PC-3 (cell line): ENCODE measurements at regions of chr14 and their contacts with region 1.

Region 1: GRCh38 chr14:30185832-30186231 is 258.2 kb upstream of the PRKD1 start:
- DNase-seq: no peak
- ATAC-seq: no peak
- H3K4me3 ChIP-seq: no peak overlapping the region
- H3K27ac ChIP-seq: no peak overlapping the region
- H3K4me1 ChIP-seq: no peaks in the 10 kb centered on the region
- H3K27me3 ChIP-seq: peaks cover 39% of the 10 kb centered on the region; the same call in 1 of the 2 replicates
- CTCF ChIP-seq: no peak; the same call in 1 of the 2 replicates

Region 2: GRCh38 chr14:30129807-30130206 is 56.0 kb before region 1 on chr14:
- CTCF ChIA-PET with region 1: no interaction called
- POLR2A ChIA-PET with region 1: no interaction called
- intact Hi-C with region 1: loop called (anchors 10 kb)
- DNase-seq: no peak
- ATAC-seq: no peak
- H3K4me3 ChIP-seq: no peak overlapping the region
- H3K27ac ChIP-seq: no peak overlapping the region
- H3K4me1 ChIP-seq: no peaks in the 10 kb centered on the region
- H3K27me3 ChIP-seq: no peaks in the 10 kb centered on the region; the same call in 1 of the 2 replicates
- CTCF ChIP-seq: no peak

Region 3: DNA sequence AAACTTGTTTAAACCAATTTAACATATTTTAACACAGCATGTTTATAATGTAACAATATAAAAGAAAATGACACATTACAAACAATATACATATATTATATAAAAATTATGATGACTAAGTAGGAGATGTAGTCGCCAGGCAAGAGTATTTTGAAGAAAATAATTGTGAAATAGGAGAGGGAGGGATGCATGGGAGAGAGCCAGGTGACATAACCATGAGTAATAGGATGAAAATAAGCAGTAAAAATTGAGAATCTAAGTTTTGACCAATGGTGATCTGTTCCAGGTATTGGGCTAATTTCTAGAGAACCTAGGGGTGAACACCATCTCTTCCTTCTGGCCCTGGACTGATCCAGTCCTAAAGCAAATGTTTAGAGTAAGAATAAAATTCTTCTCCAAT is 58.0 kb after region 1 on chr14:
- CTCF ChIA-PET with region 1: no interaction called
- POLR2A ChIA-PET with region 1: no interaction called
- intact Hi-C with region 1: no loop called
- DNase-seq: peak; percentile 94
- ATAC-seq: peak; percentile 90
- H3K4me3 ChIP-seq: no peak overlapping the region
- H3K27ac ChIP-seq: peak overlapping the region; percentile 44
- H3K4me1 ChIP-seq: peaks cover 20% of the 10 kb centered on the region
- H3K27me3 ChIP-seq: no peaks in the 10 kb centered on the region
- CTCF ChIP-seq: no peak

Region 4: DNA sequence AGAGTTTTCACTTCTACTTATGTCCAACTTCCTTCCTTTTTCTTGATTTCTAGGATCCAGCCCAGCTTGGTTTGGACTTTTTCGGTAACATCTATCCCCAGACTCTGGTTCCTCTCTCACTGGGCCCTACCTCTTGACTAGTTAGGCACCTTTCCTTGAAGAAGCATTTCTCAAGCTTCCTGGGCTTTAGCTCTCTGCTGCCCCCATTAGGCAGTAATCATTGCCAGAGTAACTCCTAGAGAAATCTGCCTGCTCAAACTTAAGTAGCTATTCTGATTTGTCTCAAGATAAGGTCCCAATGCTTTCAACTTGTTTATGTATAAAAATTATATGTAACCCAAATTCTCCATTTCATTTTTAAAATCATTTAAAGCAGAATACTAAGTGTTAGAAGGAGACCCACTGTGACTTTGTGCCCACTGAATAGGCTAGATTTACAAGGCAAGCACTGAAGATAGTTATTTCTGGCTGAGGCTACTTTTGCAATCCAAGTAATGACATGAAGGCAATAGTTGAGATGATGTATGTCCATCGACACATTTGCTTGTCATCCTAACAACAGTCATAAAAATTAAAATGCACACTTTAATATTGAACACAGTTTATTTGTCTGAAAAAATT is 98.1 kb after region 1 on chr14:
- CTCF ChIA-PET with region 1: no interaction called
- POLR2A ChIA-PET with region 1: no interaction called
- intact Hi-C with region 1: no loop called
- DNase-seq: peak; percentile 78
- ATAC-seq: peak; percentile 77
- H3K4me3 ChIP-seq: no peak overlapping the region
- H3K27ac ChIP-seq: no peak overlapping the region
- H3K4me1 ChIP-seq: no peaks in the 10 kb centered on the region
- H3K27me3 ChIP-seq: peaks cover 8% of the 10 kb centered on the region; the same call in 1 of the 2 replicates
- CTCF ChIP-seq: peak; percentile 95